Ovary (tissue), 10 donors: ENCODE measurements at regions of chr7 and their contacts with region 1.

Region 1: GRCh38 chr7:32942786-32943653 is 14.2 kb upstream of the FKBP9 start:
- DNase-seq: peak; percentile 75 to 86 (median 79)
- H3K4me3 ChIP-seq: peak overlapping the region; percentile 71
- H3K27ac ChIP-seq: peak overlapping the region; percentile 90 to 94
- H3K4me1 ChIP-seq: peaks cover 1% of the 10 kb centered on the region
- H3K27me3 ChIP-seq: no peaks in the 10 kb centered on the region
- CTCF ChIP-seq: peak; percentile 50 to 78 (median 70)
- EP300 ChIP-seq: no peak
- POLR2A ChIP-seq: peak; percentile 31

Region 2: DNA sequence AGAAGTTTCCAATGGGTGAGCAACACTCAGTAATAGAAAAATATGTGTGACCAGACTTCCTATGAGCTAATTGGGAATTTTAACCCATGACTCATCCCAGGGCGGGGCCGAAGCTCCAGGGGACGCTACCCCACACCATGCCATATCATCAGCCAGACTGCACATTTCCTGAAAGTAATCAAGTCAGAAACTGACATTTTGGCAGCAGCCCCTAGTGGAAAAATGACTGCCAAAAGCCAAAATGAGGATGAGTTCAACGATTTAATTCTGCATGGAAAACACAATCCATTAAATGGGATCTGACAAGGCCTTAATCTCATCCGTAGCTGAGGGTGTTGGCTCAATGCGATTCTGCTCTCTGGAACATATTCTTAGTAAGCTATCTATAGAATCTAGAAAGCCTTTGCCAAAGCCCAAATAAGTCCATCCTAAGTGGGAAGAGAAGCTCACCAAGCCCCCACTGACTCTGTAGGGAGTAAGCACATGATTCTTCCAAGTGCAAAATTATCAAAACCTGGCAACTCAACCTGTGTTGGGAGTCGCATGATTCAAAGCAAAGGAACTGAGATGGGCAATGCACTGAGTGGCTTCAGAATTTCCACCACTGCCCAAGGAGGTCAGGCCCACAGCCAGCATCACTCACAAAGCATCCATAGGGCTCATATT is 779.7 kb before region 1 on chr7:
- intact Hi-C with region 1: no loop called
- DNase-seq: peak in 3 of 5 donors; percentile 19 to 39 (median 30)
- H3K4me3 ChIP-seq: no peak overlapping the region
- H3K27ac ChIP-seq: no peak overlapping the region
- H3K4me1 ChIP-seq: no peaks in the 10 kb centered on the region
- H3K27me3 ChIP-seq: no peaks in the 10 kb centered on the region
- CTCF ChIP-seq: no peak
- EP300 ChIP-seq: no peak
- POLR2A ChIP-seq: no peak

Region 3: GRCh38 chr7:32410545-32410944 is 532.5 kb before region 1 on chr7:
- intact Hi-C with region 1: no loop called
- DNase-seq: no peak
- H3K4me3 ChIP-seq: no peak overlapping the region
- H3K27ac ChIP-seq: no peak overlapping the region
- H3K4me1 ChIP-seq: no peaks in the 10 kb centered on the region
- H3K27me3 ChIP-seq: no peaks in the 10 kb centered on the region
- CTCF ChIP-seq: no peak
- EP300 ChIP-seq: no peak
- POLR2A ChIP-seq: no peak

Region 4: DNA sequence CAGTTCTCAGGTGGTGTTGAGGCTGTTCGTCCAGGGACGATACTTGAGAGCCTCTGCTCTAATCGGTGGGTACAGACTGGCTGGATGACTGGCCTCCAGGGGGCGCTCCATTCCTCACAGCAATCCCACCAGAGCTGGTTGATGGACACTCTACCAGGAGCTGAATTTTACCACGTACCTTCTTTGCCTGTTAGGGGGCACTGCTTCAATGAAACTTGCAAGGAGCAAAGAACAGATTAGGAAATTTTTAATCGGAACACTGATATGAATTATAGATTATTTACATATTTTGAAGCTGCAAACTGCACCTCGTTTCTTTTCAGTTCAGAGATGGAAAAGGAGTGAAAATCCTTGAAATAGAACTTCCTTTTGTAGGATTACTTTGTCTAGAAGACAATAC is 96.3 kb before region 1 on chr7:
- intact Hi-C with region 1: loop called in 1 of 4 experiments (anchors 5 kb)
- DNase-seq: peak; percentile 82 to 91 (median 88)
- H3K4me3 ChIP-seq: no peak overlapping the region
- H3K27ac ChIP-seq: no peak overlapping the region
- H3K4me1 ChIP-seq: no peaks in the 10 kb centered on the region
- H3K27me3 ChIP-seq: no peaks in the 10 kb centered on the region
- CTCF ChIP-seq: peak; percentile 64 to 76 (median 71)
- EP300 ChIP-seq: no peak
- POLR2A ChIP-seq: no peak

Region 5: DNA sequence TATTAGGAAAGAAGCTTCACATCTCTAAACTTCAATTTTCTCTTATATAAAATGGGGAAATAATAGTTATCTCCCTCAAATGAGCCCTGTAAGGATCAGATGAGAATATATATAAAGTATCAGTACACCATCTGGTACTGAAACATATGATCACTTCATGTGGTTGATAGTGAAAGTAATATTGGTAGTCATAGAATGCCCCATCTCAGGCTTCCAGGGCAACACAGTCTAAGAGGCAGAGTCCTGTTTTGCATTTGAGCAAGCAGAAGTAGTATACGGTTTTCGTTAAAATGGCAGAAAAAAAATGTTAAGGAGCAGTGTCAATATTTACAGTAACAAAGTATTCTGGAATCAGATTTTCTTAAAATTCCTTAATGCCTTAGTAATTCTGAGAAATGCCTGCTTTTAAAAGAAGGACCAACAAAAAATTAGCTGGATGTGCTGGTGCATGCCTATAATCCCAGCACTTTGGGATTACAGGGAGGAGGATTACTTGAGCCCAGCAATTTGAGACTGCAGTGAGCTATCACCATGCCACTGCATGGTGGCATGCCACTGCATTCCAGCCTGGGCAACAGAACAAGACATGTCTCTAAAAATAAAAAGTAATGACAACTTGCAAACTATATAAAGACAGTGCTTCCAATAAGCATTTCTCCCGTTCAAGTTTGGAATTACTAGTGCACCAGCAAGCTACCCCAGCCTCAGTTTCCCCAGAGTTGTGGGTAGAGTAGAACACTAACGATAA is 71.2 kb before region 1 on chr7:
- intact Hi-C with region 1: no loop called
- DNase-seq: no peak
- H3K4me3 ChIP-seq: no peak overlapping the region
- H3K27ac ChIP-seq: no peak overlapping the region
- H3K4me1 ChIP-seq: peaks cover 3% of the 10 kb centered on the region
- H3K27me3 ChIP-seq: no peaks in the 10 kb centered on the region
- CTCF ChIP-seq: no peak
- EP300 ChIP-seq: no peak
- POLR2A ChIP-seq: no peak

Region 6: DNA sequence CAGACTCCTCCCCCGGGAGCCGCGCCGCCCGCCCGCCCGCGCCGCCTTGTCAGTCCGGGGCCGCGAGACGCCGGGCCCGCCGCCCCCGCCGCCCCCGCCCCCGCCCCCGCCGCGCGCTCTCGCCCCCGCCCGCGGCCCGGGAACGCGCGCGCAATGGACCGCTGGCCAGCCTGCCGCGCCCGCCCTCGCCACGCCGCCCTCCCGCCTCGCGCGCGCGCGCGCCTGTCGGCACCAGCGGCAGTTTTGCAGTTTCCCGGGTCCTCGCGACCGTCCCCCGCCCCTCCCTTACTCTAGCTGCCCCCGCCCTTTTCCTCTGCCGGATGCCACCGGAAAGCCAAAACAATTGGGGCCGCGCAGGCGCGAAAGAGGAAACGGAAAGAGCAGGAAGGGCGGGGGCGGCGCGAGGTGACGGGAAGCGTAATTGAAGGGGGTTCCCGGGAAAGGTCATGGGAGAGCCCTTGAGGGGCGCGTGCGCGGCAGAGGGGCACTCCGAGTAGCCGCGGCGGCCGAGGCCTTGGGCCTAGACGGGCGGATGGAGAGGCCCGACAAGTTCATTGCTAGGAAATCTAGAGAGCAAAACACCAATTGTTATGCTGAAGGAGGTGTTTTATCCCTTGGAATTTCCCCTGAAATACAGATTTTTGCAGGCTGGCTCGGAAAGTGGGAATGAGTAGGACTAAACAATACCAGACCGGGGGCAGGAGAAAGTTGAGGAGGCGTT is 51.1 kb before region 1 on chr7:
- intact Hi-C with region 1: loop called in 1 of 4 experiments (anchors 5 kb)
- DNase-seq: peak; percentile 96 to 98 (median 97)
- H3K4me3 ChIP-seq: peak overlapping the region; percentile 87
- H3K27ac ChIP-seq: peak overlapping the region; percentile 97 to 99
- H3K4me1 ChIP-seq: peaks cover 6% of the 10 kb centered on the region
- H3K27me3 ChIP-seq: no peaks in the 10 kb centered on the region
- CTCF ChIP-seq: no peak
- EP300 ChIP-seq: peak; percentile 11
- POLR2A ChIP-seq: peak; percentile 58